GM12878 (cell line): ENCODE measurements at regions of chr22 and their contacts with region 1.

Region 1: DNA sequence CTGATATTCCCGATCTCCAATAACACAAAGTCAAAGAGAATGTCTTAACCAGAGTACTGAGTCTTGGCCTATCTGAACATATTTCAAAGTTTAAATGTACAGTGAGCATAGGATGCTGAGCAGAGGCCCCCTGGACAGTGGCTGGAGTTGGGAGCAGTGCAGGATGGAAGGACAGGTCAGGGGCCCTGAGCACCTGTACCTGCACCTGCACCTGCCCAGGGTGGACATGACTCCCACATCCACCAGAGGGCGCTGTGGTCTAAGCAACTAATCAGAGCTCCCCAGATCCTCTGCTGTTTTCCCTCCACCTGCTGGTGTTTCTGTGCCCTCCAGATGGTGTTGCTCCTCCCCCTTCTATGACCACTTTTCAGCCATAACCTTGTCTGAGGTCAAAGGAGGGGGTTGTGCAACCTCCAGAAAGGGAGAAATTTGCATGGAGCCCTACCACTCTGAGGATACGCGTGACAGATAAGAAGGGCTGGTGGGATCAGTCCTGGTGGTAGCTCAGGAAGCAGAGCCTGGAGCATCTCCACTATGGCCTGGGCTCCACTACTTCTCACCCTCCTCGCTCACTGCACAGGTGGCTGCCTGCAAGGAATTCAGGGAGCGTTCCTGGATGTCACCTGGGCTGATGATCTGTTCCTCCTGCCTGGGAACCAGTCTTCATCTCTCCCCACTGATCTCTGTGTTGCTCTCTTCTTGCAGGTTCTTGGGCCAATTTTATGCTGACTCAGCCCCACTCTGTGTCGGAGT is 49.1 kb upstream of the VPREB1 start:
- DNase-seq: peak; percentile 91
- ATAC-seq: peak; percentile 94
- H3K4me3 ChIP-seq: peak overlapping the region; percentile 62; the same call in 1 of the 2 replicates
- H3K27ac ChIP-seq: peak overlapping the region; percentile 63
- H3K4me1 ChIP-seq: peaks cover 18% of the 10 kb centered on the region
- H3K27me3 ChIP-seq: no peaks in the 10 kb centered on the region
- CTCF ChIP-seq: peak; percentile 94 to 95 (median 94); a peak in 5 of 6 replicates
- EP300 ChIP-seq: peak in 1 of 2 experiments; percentile 64; a peak in 3 of 4 replicates
- POLR2A ChIP-seq: peak; percentile 56; the same call in 1 of the 2 replicates
- RAD21 ChIP-seq: peak; percentile 55

Region 2: DNA sequence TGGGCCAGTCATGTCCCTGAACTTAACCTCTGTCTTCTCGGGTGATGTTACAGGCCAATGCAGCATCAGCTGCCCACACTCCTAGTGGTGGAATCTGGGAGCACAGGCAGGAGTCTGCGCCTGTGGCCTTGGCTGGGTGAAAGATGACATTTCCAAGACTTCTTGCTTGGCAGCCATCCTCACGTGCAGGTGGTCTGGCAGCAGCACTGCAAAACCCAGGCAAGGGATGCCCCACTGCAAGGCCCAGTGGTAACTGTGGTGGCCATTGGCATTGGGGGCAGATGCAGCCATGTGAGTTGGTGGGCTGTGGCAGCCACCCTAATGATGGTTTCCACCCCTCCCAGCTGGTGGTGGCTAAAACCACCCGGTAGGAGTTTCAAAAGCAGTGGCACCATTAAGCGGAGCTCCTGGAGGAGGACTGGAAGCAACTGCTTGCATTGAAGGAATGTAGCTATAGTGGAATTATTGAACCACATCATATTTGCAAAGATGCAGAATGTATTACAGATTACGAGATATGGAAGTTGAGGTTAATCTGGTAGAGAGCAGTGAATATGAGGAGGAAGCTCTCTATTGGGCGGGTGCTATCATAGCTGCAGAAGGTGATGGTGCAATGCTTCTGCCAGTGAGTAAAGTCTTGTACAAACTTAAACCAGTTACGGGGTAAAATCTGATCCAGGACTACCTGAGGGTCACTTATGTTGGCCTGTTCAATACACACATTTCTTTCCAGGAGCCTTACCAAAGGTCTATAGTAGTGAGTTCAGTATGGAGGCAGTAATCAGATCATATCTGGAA is 92.2 kb before region 1 on chr22:
- CTCF ChIA-PET with region 1: interaction called, 15 read pairs
- POLR2A ChIA-PET with region 1: interaction called, 3 read pairs
- RAD21 ChIA-PET with region 1: interaction called, 12 read pairs
- SMC1A ChIA-PET with region 1: interaction called, 18 read pairs
- in situ Hi-C with region 1: no loop called
- intact Hi-C with region 1: no loop called
- DNase-seq: no peak
- ATAC-seq: 0 out of 3 replicates have a peak, but pooled peaks have one; percentile 18
- H3K4me3 ChIP-seq: no peak overlapping the region
- H3K27ac ChIP-seq: no peak overlapping the region
- H3K4me1 ChIP-seq: peaks cover 9% of the 10 kb centered on the region
- H3K27me3 ChIP-seq: no peaks in the 10 kb centered on the region
- CTCF ChIP-seq: peak; percentile 17 to 60 (median 30); a peak in 5 of 6 replicates
- EP300 ChIP-seq: no peak
- POLR2A ChIP-seq: no peak
- RAD21 ChIP-seq: no peak

Region 3: GRCh38 chr22:22161924-22162851 is 33.3 kb before region 1 on chr22:
- CTCF ChIA-PET with region 1: interaction called, 38 read pairs
- POLR2A ChIA-PET with region 1: interaction called, 3 read pairs
- RAD21 ChIA-PET with region 1: interaction called, 22 read pairs
- SMC1A ChIA-PET with region 1: interaction called, 33 read pairs
- in situ Hi-C with region 1: loop called (anchors 5 kb)
- intact Hi-C with region 1: loop called (anchors 1 kb)
- DNase-seq: peak; percentile 42
- ATAC-seq: peak; percentile 92
- H3K4me3 ChIP-seq: peak overlapping the region; percentile 30; the same call in 1 of the 2 replicates
- H3K27ac ChIP-seq: no peak overlapping the region; the same call in 1 of the 2 replicates
- H3K4me1 ChIP-seq: peaks cover 19% of the 10 kb centered on the region
- H3K27me3 ChIP-seq: no peaks in the 10 kb centered on the region
- CTCF ChIP-seq: no peak
- EP300 ChIP-seq: no peak
- POLR2A ChIP-seq: peak; percentile 86
- RAD21 ChIP-seq: no peak

Region 4: GRCh38 chr22:22181341-22181850 is 14.0 kb before region 1 on chr22:
- CTCF ChIA-PET with region 1: interaction called, 27 read pairs
- POLR2A ChIA-PET with region 1: interaction called, 5 read pairs
- RAD21 ChIA-PET with region 1: interaction called, 4 read pairs
- SMC1A ChIA-PET with region 1: interaction called, 14 read pairs
- in situ Hi-C with region 1: no loop called
- intact Hi-C with region 1: no loop called
- DNase-seq: no peak
- ATAC-seq: no peak
- H3K4me3 ChIP-seq: no peak overlapping the region
- H3K27ac ChIP-seq: no peak overlapping the region
- H3K4me1 ChIP-seq: peaks cover 3% of the 10 kb centered on the region; the same call in 1 of the 2 replicates
- H3K27me3 ChIP-seq: no peaks in the 10 kb centered on the region
- CTCF ChIP-seq: no peak
- EP300 ChIP-seq: no peak
- POLR2A ChIP-seq: no peak
- RAD21 ChIP-seq: no peak

Region 5: GRCh38 chr22:22235558-22235957 is 40.1 kb after region 1 on chr22:
- CTCF ChIA-PET with region 1: interaction called, 20 read pairs
- POLR2A ChIA-PET with region 1: no interaction called
- RAD21 ChIA-PET with region 1: interaction called, 10 read pairs
- SMC1A ChIA-PET with region 1: interaction called, 13 read pairs
- in situ Hi-C with region 1: no loop called
- intact Hi-C with region 1: no loop called
- DNase-seq: peak; percentile 17
- ATAC-seq: peak; percentile 48; the same call in 2 of the 3 replicates
- H3K4me3 ChIP-seq: no peak overlapping the region
- H3K27ac ChIP-seq: no peak overlapping the region
- H3K4me1 ChIP-seq: no peaks in the 10 kb centered on the region
- H3K27me3 ChIP-seq: no peaks in the 10 kb centered on the region
- CTCF ChIP-seq: peak; percentile 51 to 55 (median 52); a peak in 5 of 6 replicates
- EP300 ChIP-seq: no peak
- POLR2A ChIP-seq: no peak
- RAD21 ChIP-seq: peak; percentile 62

Region 6: GRCh38 chr22:22913989-22914388 is 718.5 kb after region 1 on chr22:
- CTCF ChIA-PET with region 1: interaction called, 3 read pairs
- POLR2A ChIA-PET with region 1: no interaction called
- RAD21 ChIA-PET with region 1: no interaction called
- SMC1A ChIA-PET with region 1: no interaction called
- in situ Hi-C with region 1: loop called (anchors 5 kb)
- intact Hi-C with region 1: no loop called
- DNase-seq: no peak
- ATAC-seq: peak; percentile 61
- H3K4me3 ChIP-seq: no peak overlapping the region
- H3K27ac ChIP-seq: no peak overlapping the region
- H3K4me1 ChIP-seq: peaks cover 31% of the 10 kb centered on the region
- H3K27me3 ChIP-seq: no peaks in the 10 kb centered on the region
- CTCF ChIP-seq: no peak
- EP300 ChIP-seq: no peak
- POLR2A ChIP-seq: no peak
- RAD21 ChIP-seq: no peak

Region 7: DNA sequence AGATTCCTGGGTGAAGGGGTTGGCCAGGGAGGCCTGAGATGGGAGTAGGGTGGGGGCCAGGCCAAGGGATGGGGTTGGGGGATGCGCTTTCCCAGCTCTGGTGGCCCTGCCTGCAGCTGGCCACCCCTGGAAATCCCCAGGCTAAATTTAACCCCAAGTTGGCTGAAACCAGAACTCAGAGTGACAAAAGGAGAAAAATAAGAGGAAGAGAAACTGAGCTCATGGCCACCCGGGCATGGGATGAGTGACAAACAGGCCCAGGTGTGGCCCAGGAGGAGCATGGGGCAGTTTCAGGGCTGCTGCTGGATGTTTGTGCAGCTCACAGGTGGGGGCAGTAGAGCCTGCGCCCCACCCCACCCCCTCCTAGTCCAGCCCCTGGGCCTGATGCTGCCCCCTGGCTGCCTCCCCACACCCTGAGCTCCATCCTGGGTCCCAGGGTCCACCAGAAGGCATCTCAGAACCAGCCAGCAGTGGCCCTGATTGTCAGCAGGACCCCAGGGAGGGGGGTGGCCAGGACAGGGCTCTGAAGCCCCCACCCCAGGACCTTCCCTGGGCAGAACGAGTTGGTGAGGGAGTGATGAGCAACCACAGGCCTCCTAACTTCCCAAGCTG is 740.2 kb after region 1 on chr22:
- CTCF ChIA-PET with region 1: interaction called, 43 read pairs
- POLR2A ChIA-PET with region 1: interaction called, 8 read pairs
- RAD21 ChIA-PET with region 1: interaction called, 34 read pairs
- SMC1A ChIA-PET with region 1: interaction called, 18 read pairs
- in situ Hi-C with region 1: no loop called
- intact Hi-C with region 1: no loop called
- DNase-seq: peak; percentile 99
- ATAC-seq: peak; percentile 84
- H3K4me3 ChIP-seq: peak overlapping the region; percentile 24; the same call in 1 of the 2 replicates
- H3K27ac ChIP-seq: peak overlapping the region; percentile 99
- H3K4me1 ChIP-seq: peaks cover 92% of the 10 kb centered on the region
- H3K27me3 ChIP-seq: no peaks in the 10 kb centered on the region
- CTCF ChIP-seq: peak; percentile 53 to 83 (median 71)
- EP300 ChIP-seq: peak; percentile 100
- POLR2A ChIP-seq: no peak; the same call in 1 of the 2 replicates
- RAD21 ChIP-seq: peak; percentile 75